ENCODE measurements at regions of chr18 and their contacts with region 1.

Region 1: GRCh38 chr18:12597775-12598174 is 60.1 kb downstream of the SPIRE1 start:
- DNase-seq: peak; percentile 84
- ATAC-seq: peak; percentile 83
- H3K4me3 ChIP-seq: no peak overlapping the region
- H3K27ac ChIP-seq: peak overlapping the region; percentile 46
- H3K4me1 ChIP-seq: peaks cover 69% of the 10 kb centered on the region
- H3K27me3 ChIP-seq: no peaks in the 10 kb centered on the region
- CTCF ChIP-seq: no peak
- EP300 ChIP-seq: peak in 1 of 2 experiments; percentile 47; a peak in 1 of 4 replicates
- POLR2A ChIP-seq: no peak
- RAD21 ChIP-seq: no peak

Region 2: GRCh38 chr18:12271376-12272235 is 326.2 kb before region 1 on chr18:
- CTCF ChIA-PET with region 1: no interaction called
- POLR2A ChIA-PET with region 1: no interaction called
- in situ Hi-C with region 1: no loop called
- intact Hi-C with region 1: no loop called
- DNase-seq: peak; percentile 68
- ATAC-seq: peak; percentile 97
- H3K4me3 ChIP-seq: peak overlapping the region; percentile 46 to 69 (median 62); a peak in 5 of 6 replicates
- H3K27ac ChIP-seq: no peak overlapping the region
- H3K4me1 ChIP-seq: peaks cover 10% of the 10 kb centered on the region
- H3K27me3 ChIP-seq: peaks cover 0 to 25% of the 10 kb centered on the region in 2 experiments; a peak in 3 of 5 replicates
- CTCF ChIP-seq: peak; percentile 82
- EP300 ChIP-seq: no peak
- POLR2A ChIP-seq: no peak
- RAD21 ChIP-seq: peak; percentile 75

Region 3: GRCh38 chr18:12639990-12640880 is 42.5 kb after region 1 on chr18:
- CTCF ChIA-PET with region 1: no interaction called
- POLR2A ChIA-PET with region 1: no interaction called
- in situ Hi-C with region 1: no loop called
- intact Hi-C with region 1: loop called (anchors 5 kb)
- DNase-seq: peak; percentile 68
- ATAC-seq: peak; percentile 97
- H3K4me3 ChIP-seq: peak overlapping the region in 1 of 3 experiments; percentile 5; a peak in 1 of 6 replicates
- H3K27ac ChIP-seq: peak overlapping the region; percentile 57
- H3K4me1 ChIP-seq: peaks cover 30% of the 10 kb centered on the region
- H3K27me3 ChIP-seq: no peaks in the 10 kb centered on the region
- CTCF ChIP-seq: peak; percentile 25; the same call in 1 of the 2 replicates
- EP300 ChIP-seq: no peak; a peak in 1 of 4 replicates
- POLR2A ChIP-seq: no peak
- RAD21 ChIP-seq: no peak

Measured in HepG2 (cell line).